Heart left ventricle (tissue), 16 donors: ENCODE measurements at regions of chr3 and their contacts with region 1.

Region 1: GRCh38 chr3:65742914-65743313 is 295.8 kb downstream of the MAGI1 start:
- DNase-seq: no peak
- ATAC-seq: no peak
- H3K4me3 ChIP-seq: no peak overlapping the region
- H3K27ac ChIP-seq: no peak overlapping the region
- H3K4me1 ChIP-seq: peaks cover 0 to 18% (median 2%) of the 10 kb centered on the region in 12 donors
- H3K27me3 ChIP-seq: no peaks in the 10 kb centered on the region
- CTCF ChIP-seq: no peak
- POLR2A ChIP-seq: no peak

Region 2: DNA sequence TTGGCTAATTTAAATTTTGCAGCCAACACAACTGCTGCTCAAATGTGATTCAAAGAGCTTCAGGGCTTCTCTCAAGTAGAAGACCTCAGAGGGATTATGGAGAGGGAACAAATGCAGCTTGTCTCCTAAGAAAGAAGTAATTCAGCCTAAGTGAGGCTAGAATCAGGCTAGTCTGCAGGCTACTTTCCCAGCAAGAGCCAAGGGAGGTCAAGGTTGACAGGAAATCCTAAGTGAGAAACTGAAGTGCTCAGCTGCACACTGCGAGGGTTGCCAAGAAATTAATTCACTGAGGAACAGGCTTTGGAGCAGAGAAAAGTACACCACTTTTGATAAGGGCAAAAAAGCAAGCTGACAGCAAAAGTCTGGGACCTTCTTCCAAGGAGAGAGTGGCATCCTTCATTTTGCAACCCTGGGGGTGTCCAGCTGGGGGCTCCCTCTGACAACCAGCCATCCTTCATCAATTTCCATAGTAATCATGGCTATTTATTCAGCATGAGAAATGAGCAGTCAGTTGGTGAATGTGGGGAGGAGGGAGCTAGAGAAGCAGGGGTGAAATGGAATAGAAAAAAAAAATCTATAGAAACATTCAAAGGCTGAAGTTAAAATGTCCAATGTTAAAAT is 408.8 kb before region 1 on chr3:
- intact Hi-C with region 1: loop called in 2 of 10 experiments (anchors 10 kb)
- DNase-seq: peak in 3 of 5 donors; percentile 32 to 58 (median 46)
- ATAC-seq: peak; percentile 39 to 75 (median 53)
- H3K4me3 ChIP-seq: no peak overlapping the region
- H3K27ac ChIP-seq: peak overlapping the region in 2 of 12 donors; percentile 3 to 13
- H3K4me1 ChIP-seq: peaks cover 0 to 30% (median 13%) of the 10 kb centered on the region in 12 donors
- H3K27me3 ChIP-seq: no peaks in the 10 kb centered on the region
- CTCF ChIP-seq: peak in 10 of 12 donors; percentile 3 to 56 (median 30)
- POLR2A ChIP-seq: no peak